A549 (cell line): ENCODE measurements at regions of chr4 and their contacts with region 1.

Region 1: GRCh38 chr4:168585168-168586091 is 88.6 kb downstream of the PALLD start:
- DNase-seq: peak; percentile 63 to 82
- ATAC-seq: peak; percentile 79 to 91
- H3K4me3 ChIP-seq: no peak overlapping the region
- H3K27ac ChIP-seq: peak overlapping the region; percentile 86 to 88
- H3K4me1 ChIP-seq: peaks cover 62% of the 10 kb centered on the region
- CTCF ChIP-seq: peak; percentile 71
- EP300 ChIP-seq: no peak
- POLR2A ChIP-seq: no peak
- RAD21 ChIP-seq: peak; percentile 86 to 88

Region 2: DNA sequence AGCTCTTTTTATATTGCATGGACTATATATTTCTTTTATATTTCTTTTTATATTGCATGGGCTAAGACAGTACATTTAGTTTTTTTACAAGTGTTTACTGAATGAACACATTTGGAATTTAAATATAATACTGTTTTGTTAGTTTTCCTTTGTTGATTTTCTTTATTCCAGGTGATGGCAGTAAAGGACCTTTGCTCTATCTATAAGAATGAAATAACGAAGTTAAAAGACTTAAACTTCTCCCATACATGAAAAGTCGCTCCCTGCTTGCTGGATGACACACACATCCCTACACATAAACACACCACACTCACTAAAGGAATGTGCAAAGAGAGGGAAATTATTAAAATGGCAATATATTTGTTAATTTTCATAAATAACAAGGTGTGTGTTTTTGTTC is 595.6 kb before region 1 on chr4:
- CTCF ChIA-PET with region 1: no interaction called
- POLR2A ChIA-PET with region 1: no interaction called
- DNase-seq: peak in 1 of 2 experiments; percentile 1
- ATAC-seq: no peak
- H3K4me3 ChIP-seq: no peak overlapping the region
- H3K27ac ChIP-seq: no peak overlapping the region
- H3K4me1 ChIP-seq: no peaks in the 10 kb centered on the region
- CTCF ChIP-seq: peak; percentile 32; the same call in 1 of the 3 replicates
- EP300 ChIP-seq: no peak
- POLR2A ChIP-seq: no peak
- RAD21 ChIP-seq: peak; percentile 39 to 52; a peak in 4 of 5 replicates

Region 3: DNA sequence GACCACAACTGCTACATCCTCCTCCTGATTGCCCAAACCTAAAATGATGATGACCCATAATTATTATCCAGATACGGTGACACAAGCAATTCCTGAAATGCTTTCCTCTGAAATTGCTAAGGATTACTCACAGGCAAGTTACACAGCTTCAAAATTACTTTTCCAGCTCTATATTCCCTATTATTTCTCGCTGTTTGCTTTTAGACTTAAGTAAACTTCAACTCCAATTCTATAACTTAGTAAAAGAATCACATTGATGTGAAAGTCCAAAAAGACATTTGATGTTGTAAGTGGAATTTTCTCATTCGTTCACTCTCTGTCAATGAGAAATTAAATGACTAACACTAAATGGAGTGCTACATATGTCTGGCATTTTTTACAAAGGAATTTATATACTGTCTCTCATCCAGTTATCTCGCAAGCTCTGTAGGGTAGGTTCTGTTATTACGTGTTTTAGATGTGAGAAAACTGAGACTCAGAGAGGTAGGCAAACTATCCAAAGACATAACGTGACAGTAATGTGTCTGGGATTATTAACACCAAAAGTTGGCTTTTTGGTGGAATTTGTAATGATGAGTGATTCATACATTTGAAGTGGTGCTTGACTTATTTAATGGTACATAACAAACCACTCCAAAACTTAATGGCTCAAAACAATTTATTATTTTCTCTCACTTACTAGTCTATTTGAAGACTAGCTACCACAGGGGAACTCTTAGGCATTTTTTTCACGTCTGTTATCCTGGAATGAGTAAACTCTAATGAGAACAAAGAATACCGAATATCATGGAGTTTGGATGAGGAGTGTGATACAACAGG is 57.1 kb before region 1 on chr4:
- CTCF ChIA-PET with region 1: interaction called, 10 read pairs
- POLR2A ChIA-PET with region 1: no interaction called
- DNase-seq: peak; percentile 28 to 84
- ATAC-seq: peak; percentile 88 to 91
- H3K4me3 ChIP-seq: no peak overlapping the region
- H3K27ac ChIP-seq: peak overlapping the region; percentile 92 to 96
- H3K4me1 ChIP-seq: peaks cover 44% of the 10 kb centered on the region
- CTCF ChIP-seq: no peak
- EP300 ChIP-seq: peak; percentile 53 to 84; a peak in 3 of 5 replicates
- POLR2A ChIP-seq: no peak
- RAD21 ChIP-seq: peak in 1 of 2 experiments; percentile 20; a peak in 1 of 5 replicates

Region 4: GRCh38 chr4:168574581-168575295 is 10.7 kb before region 1 on chr4:
- CTCF ChIA-PET with region 1: interaction called, 10 read pairs
- POLR2A ChIA-PET with region 1: no interaction called
- DNase-seq: no peak
- ATAC-seq: no peak
- H3K4me3 ChIP-seq: no peak overlapping the region
- H3K27ac ChIP-seq: peak overlapping the region in 1 of 2 experiments; percentile 10; a peak in 2 of 6 replicates
- H3K4me1 ChIP-seq: peaks cover 9% of the 10 kb centered on the region; the same call in 2 of the 3 replicates
- CTCF ChIP-seq: no peak
- EP300 ChIP-seq: no peak
- POLR2A ChIP-seq: no peak
- RAD21 ChIP-seq: no peak

Region 5: DNA sequence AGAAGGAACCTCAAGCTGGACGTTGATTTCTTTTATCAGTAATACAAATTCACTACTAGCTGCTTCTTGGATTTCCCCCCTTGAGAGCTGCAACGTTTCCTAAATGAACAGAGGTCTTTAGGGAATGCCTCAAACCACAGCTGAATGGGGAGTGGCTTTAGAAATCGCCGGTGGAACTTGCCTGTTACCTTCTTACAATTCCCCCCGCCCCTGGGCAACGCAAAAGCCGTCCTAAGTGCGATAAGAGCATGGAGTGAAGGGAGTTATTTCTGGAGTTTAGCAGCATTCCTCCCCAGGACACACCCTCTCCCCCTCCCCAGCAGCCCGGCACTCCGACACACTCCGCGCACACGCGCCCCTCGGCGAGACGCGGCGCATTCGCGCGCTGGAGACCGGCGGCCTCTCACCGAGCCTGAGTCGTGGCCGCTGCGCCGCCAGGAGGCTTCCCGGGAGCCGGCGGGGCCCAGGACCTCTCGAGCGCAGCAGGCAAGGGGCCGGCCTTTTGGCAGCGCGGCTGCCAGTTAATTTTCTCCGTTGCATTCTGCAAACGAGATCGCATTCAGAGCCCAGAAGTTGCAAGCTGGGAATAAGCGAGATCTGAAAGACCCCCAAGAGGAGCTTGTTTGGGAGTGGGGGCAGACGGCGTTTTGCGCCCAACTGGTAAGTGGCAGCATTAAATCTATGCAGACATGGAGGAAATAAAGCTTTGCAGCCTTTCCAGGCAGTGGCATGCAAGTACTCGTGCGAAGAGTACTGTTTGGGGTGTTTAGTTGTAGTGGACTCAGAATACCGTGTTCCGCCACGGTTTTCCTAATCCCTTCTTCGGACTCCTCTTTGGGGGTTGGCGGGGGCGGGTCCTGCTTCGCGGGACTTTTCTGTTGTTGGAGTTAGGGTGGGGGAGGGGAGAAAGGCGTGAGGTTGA is 46.1 kb after region 1 on chr4:
- CTCF ChIA-PET with region 1: interaction called, 88 read pairs
- POLR2A ChIA-PET with region 1: interaction called, 3 read pairs
- DNase-seq: peak; percentile 62 to 73
- ATAC-seq: peak; percentile 93 to 95
- H3K4me3 ChIP-seq: peak overlapping the region; percentile 58
- H3K27ac ChIP-seq: peak overlapping the region; percentile 84 to 96
- H3K4me1 ChIP-seq: peaks cover 39% of the 10 kb centered on the region
- CTCF ChIP-seq: peak; percentile 27
- EP300 ChIP-seq: no peak
- POLR2A ChIP-seq: 0 out of 2 replicates have a peak, but pooled peaks have one; percentile 24
- RAD21 ChIP-seq: peak; percentile 26 to 63; a peak in 3 of 5 replicates

Region 6: GRCh38 chr4:168831919-168832762 is 246.7 kb after region 1 on chr4:
- CTCF ChIA-PET with region 1: interaction called, 5 read pairs
- POLR2A ChIA-PET with region 1: interaction called, 12 read pairs
- DNase-seq: peak; percentile 76 to 77
- ATAC-seq: peak; percentile 87
- H3K4me3 ChIP-seq: peak overlapping the region; percentile 99
- H3K27ac ChIP-seq: peak overlapping the region; percentile 95 to 97
- H3K4me1 ChIP-seq: peaks cover 45% of the 10 kb centered on the region
- CTCF ChIP-seq: no peak
- EP300 ChIP-seq: no peak
- POLR2A ChIP-seq: peak; percentile 92
- RAD21 ChIP-seq: peak in 1 of 2 experiments; percentile 28; a peak in 1 of 5 replicates